Adrenal gland (tissue), 19 donors: ENCODE measurements at regions of chr1 and their contacts with region 1.

Region 1: GRCh38 chr1:8987881-8988617 is 38.2 kb downstream of the SLC2A7 start:
- DNase-seq: peak in 6 of 7 donors; percentile 39 to 72 (median 54)
- H3K4me3 ChIP-seq: no peak overlapping the region
- H3K27ac ChIP-seq: no peak overlapping the region
- H3K4me1 ChIP-seq: peaks cover 0 to 7% of the 10 kb centered on the region in 2 donors
- H3K27me3 ChIP-seq: no peaks in the 10 kb centered on the region
- CTCF ChIP-seq: peak; percentile 68 to 92 (median 82)
- POLR2A ChIP-seq: no peak

Region 2: DNA sequence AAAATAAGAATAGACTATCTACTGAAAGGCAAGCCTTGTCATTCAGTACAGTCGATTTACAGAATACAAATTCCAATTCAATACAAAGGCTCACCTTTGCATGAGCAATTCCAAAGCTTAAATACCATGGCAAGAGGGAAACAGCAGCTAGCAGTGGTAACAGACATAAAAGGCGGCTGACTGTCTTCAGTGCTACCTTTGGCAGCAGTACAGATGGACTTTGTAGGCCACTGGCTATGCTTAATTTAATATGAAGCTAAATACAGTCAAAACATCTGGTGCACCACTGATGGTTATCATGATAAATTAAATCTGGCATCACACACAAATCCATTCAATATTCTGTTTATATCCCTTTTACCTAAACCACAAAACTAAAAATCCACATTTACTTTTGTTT is 233.1 kb before region 1 on chr1:
- intact Hi-C with region 1: no loop called
- DNase-seq: no peak
- H3K4me3 ChIP-seq: no peak overlapping the region
- H3K27ac ChIP-seq: no peak overlapping the region
- H3K4me1 ChIP-seq: peaks cover 10 to 34% of the 10 kb centered on the region in 2 donors
- H3K27me3 ChIP-seq: no peaks in the 10 kb centered on the region
- CTCF ChIP-seq: no peak
- POLR2A ChIP-seq: no peak

Region 3: DNA sequence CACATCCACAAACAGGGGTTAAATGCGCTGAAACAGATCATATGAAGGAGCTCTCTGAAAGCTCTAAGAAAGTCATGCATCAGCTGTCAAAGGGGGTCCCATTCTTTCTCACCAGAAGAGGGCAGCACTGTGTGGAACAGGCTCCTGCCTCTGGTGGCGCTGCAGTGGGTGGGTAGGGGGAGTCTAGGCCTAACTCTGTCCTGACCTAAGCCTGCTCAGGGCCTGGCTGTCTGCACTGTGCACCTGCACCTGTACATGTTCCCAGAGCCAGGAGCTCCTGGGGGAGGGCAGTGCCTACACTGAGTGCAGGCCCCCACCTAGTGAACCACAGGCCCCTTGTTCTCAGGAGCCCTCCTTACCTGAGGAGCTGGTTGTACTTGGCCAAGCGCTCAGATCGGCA is 125.5 kb before region 1 on chr1:
- intact Hi-C with region 1: loop called in 1 of 2 experiments (anchors 5 kb)
- DNase-seq: no peak
- H3K4me3 ChIP-seq: no peak overlapping the region
- H3K27ac ChIP-seq: no peak overlapping the region
- H3K4me1 ChIP-seq: peaks cover 12 to 22% of the 10 kb centered on the region in 2 donors
- H3K27me3 ChIP-seq: no peaks in the 10 kb centered on the region
- CTCF ChIP-seq: peak; percentile 24 to 38 (median 36)
- POLR2A ChIP-seq: no peak

Region 4: GRCh38 chr1:8930116-8930515 is 57.9 kb before region 1 on chr1:
- intact Hi-C with region 1: no loop called
- DNase-seq: no peak
- H3K4me3 ChIP-seq: no peak overlapping the region
- H3K27ac ChIP-seq: no peak overlapping the region
- H3K4me1 ChIP-seq: no peaks in the 10 kb centered on the region
- H3K27me3 ChIP-seq: no peaks in the 10 kb centered on the region
- CTCF ChIP-seq: no peak
- POLR2A ChIP-seq: no peak

Region 5: DNA sequence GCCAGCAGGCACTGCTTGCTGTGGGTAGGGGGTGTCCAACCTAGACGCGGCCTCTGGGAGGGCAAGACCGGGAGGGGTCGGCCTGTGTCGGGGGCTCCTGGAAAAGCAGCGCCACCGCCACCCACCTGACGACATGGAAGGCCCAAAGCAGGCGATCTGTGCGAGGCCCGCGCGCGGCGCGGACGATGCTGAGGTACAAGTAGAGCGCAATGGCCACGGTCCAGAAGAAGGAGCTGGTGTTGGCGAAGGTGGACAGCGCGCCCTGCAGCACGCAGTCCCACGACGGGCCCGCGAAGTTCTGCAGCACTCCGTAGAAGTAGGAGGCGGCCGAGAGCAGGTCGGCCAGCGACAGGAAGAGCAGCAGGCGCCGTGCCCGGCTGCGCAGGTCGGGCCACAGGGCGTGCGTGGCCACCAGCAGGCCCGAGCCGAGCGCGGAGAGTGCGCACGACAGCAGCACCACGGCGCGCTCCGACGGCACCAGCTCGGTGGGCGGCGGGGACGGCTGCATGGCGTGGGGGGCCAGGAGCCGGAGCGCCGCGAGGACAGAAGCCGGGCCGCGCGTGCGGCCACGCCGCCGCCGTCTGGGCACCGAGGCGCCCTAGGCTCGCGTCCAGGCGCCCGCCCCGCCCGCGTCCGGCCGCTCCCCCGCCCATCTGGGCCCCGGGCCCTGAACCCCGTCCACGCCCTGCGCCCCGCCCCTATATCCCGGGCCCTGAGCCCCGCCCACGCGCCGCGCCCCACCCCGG is 140.6 kb after region 1 on chr1 and contains the start of gene GPR157:
- intact Hi-C with region 1: no loop called
- DNase-seq: peak; percentile 90 to 93 (median 93)
- H3K4me3 ChIP-seq: peak within 1 kb of the TSS in 3 of 4 donors; percentile 40 to 76 (median 50)
- H3K27ac ChIP-seq: peak within 1 kb of the TSS; percentile 43 to 95 (median 78)
- H3K4me1 ChIP-seq: peaks cover 6 to 24% of the 10 kb centered on the region in 2 donors
- H3K27me3 ChIP-seq: no peaks in the 10 kb centered on the region
- CTCF ChIP-seq: no peak
- POLR2A ChIP-seq: peak; percentile 61 to 87
- total RNA-seq, gene GPR157: 5.0 to 16.8 (median 8.5) TPM